SK-N-SH (cell line): ENCODE measurements at regions of chr13 and their contacts with region 1.

Region 1: DNA sequence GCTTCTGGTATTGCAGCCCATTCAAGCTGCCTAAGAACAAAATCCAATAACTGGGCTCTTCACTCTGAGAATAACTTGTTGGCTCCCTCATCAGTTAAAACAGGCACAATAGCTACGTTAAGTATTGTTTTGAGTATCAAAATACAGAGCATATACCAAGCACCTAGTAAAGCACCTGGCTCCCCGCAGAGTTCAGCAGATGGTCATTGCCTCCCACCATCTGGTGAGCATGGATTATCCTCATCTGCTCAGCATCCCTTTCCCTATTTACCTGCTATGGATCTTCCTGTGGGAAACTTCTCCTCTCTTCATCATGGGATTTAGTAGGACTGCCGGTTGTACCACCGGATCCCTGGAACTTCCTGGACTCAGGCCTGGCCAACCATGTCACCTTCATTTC is 199.2 kb upstream of the MAB21L1 start:
- DNase-seq: no peak
- H3K4me3 ChIP-seq: no peak overlapping the region
- H3K27ac ChIP-seq: no peak overlapping the region
- H3K4me1 ChIP-seq: no peaks in the 10 kb centered on the region; a peak in 2 of 4 replicates
- H3K27me3 ChIP-seq: no peaks in the 10 kb centered on the region
- CTCF ChIP-seq: no peak
- EP300 ChIP-seq: no peak
- RAD21 ChIP-seq: no peak

Region 2: DNA sequence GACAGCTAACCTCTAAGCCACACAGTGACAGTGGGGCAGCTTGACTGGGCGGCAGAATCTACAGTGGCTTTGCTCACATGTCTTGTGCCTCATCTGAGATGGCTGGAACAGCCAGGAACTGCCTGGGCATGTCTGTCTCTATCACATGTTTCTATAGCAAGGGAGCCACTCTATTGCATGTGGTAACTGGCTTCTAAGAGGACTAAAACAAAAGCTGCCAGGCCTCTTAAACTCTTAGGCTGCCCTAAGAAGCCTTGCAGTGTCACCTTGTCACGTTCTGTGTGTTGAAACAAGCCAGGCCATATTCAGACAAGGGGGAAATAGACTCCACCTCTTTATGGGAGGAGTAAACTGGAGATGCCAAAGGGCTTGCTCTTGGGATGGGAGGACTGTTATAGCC is 76.3 kb before region 1 on chr13:
- CTCF ChIA-PET with region 1: no interaction called
- POLR2A ChIA-PET with region 1: no interaction called
- DNase-seq: no peak
- H3K4me3 ChIP-seq: no peak overlapping the region
- H3K27ac ChIP-seq: peak overlapping the region; percentile 22 to 86
- H3K4me1 ChIP-seq: peaks cover 0 to 25% of the 10 kb centered on the region in 2 experiments; a peak in 3 of 4 replicates
- H3K27me3 ChIP-seq: no peaks in the 10 kb centered on the region
- CTCF ChIP-seq: no peak
- EP300 ChIP-seq: no peak
- RAD21 ChIP-seq: no peak

Region 3: GRCh38 chr13:35648201-35648600 is 27.4 kb before region 1 on chr13:
- CTCF ChIA-PET with region 1: no interaction called
- POLR2A ChIA-PET with region 1: no interaction called
- DNase-seq: no peak
- H3K4me3 ChIP-seq: no peak overlapping the region
- H3K27ac ChIP-seq: peak overlapping the region in 1 of 2 experiments; percentile 20; a peak in 1 of 4 replicates
- H3K4me1 ChIP-seq: peaks cover 0 to 3% of the 10 kb centered on the region in 2 experiments; a peak in 1 of 4 replicates
- H3K27me3 ChIP-seq: no peaks in the 10 kb centered on the region
- CTCF ChIP-seq: no peak
- EP300 ChIP-seq: no peak
- RAD21 ChIP-seq: no peak

Region 4: DNA sequence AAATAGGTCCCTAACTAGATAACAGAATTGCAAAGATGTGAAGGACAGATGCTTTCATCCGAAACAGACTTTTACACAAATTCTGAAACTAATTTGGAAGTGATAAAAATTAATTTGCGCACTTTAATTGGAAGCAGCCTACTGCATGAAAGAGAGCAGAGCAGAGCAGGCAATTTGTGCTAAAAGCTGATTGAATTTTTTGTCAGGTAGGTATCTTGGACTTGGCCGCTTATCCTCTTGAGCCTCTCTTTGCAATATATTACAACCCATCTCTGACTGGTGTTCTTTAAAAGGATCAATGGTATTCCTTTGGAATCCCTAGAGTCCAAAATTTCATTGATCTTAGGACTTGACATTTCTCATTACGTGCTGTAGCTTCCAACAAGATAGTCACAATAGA is 15.9 kb before region 1 on chr13:
- CTCF ChIA-PET with region 1: interaction called, 10 read pairs
- POLR2A ChIA-PET with region 1: no interaction called
- DNase-seq: no peak
- H3K4me3 ChIP-seq: no peak overlapping the region; a peak in 1 of 4 replicates
- H3K27ac ChIP-seq: no peak overlapping the region
- H3K4me1 ChIP-seq: peaks cover 0 to 9% of the 10 kb centered on the region in 2 experiments; a peak in 2 of 4 replicates
- H3K27me3 ChIP-seq: no peaks in the 10 kb centered on the region
- CTCF ChIP-seq: no peak
- EP300 ChIP-seq: no peak
- RAD21 ChIP-seq: no peak

Region 5: GRCh38 chr13:35694031-35694430 is 18.4 kb after region 1 on chr13:
- CTCF ChIA-PET with region 1: no interaction called
- POLR2A ChIA-PET with region 1: no interaction called
- DNase-seq: no peak
- H3K4me3 ChIP-seq: no peak overlapping the region
- H3K27ac ChIP-seq: no peak overlapping the region
- H3K4me1 ChIP-seq: peaks cover 4 to 7% of the 10 kb centered on the region in 2 experiments; a peak in 3 of 4 replicates
- H3K27me3 ChIP-seq: no peaks in the 10 kb centered on the region
- CTCF ChIP-seq: no peak
- EP300 ChIP-seq: no peak
- RAD21 ChIP-seq: no peak

Region 6: DNA sequence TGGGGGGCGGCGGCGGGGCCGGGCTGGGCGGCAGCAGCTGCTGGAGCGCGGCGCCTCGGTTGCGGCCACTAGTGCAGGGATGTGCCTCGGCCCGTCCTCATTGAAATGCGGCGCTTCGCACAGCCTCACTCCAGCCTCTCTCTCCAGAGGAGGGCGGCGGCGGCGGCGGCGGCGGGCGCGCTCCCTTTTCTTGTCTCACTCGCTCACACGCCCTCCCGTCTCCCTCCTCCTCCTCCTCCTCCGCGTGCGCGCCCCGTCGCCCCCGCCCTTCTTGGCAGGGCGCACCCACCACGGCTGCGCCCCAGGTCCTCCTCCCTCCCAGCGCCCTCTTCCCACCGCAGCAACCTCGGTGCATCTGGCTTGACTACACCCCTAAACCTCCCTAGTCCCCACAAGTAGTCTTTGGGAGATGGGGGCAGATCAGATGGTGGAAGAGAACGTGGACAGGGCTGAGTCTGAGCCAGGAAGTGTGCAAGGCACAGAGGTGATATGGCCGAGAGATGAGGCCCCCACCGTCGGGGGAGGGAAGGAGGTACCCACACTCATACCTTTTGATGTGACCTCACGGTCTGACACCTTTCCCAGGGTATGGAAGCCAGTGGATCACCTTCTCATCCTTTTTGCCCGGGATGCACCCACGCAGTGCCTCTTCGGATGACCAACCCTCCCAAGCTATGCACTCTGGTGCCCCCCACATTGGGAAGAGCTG is 455.7 kb after region 1 on chr13 and contains the start of gene DCLK1:
- CTCF ChIA-PET with region 1: no interaction called
- POLR2A ChIA-PET with region 1: no interaction called
- DNase-seq: peak; percentile 80
- H3K4me3 ChIP-seq: peak within 1 kb of the TSS; percentile 61 to 75
- H3K27ac ChIP-seq: no peak within 1 kb of the TSS; a peak in 1 of 4 replicates
- H3K4me1 ChIP-seq: peaks cover 11% of the 10 kb centered on the region in 2 experiments; a peak in 3 of 4 replicates
- H3K27me3 ChIP-seq: no peaks in the 10 kb centered on the region
- CTCF ChIP-seq: no peak
- EP300 ChIP-seq: no peak
- RAD21 ChIP-seq: no peak
- polyA plus RNA-seq, gene DCLK1: 0.94 and 1.1 TPM in 2 replicates